ENCODE measurements at regions of chr12 and their contacts with region 1.

Region 1: GRCh38 chr12:42372154-42372791 is 46.3 kb downstream of the PPHLN1 start:
- DNase-seq: peak; percentile 33
- H3K4me3 Mint-ChIP-seq: no peak overlapping the region
- H3K27ac Mint-ChIP-seq: no peak overlapping the region
- H3K4me1 Mint-ChIP-seq: peaks cover 3% of the 10 kb centered on the region
- H3K27me3 Mint-ChIP-seq: no peaks in the 10 kb centered on the region

Region 2: GRCh38 chr12:40946612-40947194 is 1425.6 kb before region 1 on chr12:
- CTCF ChIA-PET with region 1: no interaction called
- intact Hi-C with region 1: loop called (anchors 10 kb)
- DNase-seq: no peak
- H3K4me3 Mint-ChIP-seq: no peak overlapping the region
- H3K27ac Mint-ChIP-seq: no peak overlapping the region
- H3K4me1 Mint-ChIP-seq: no peaks in the 10 kb centered on the region
- H3K27me3 Mint-ChIP-seq: peaks cover 9% of the 10 kb centered on the region

Region 3: GRCh38 chr12:41684997-41685396 is 687.3 kb before region 1 on chr12:
- CTCF ChIA-PET with region 1: no interaction called
- intact Hi-C with region 1: loop called (anchors 2 kb)
- DNase-seq: no peak
- H3K4me3 Mint-ChIP-seq: no peak overlapping the region
- H3K27ac Mint-ChIP-seq: no peak overlapping the region
- H3K4me1 Mint-ChIP-seq: no peaks in the 10 kb centered on the region
- H3K27me3 Mint-ChIP-seq: no peaks in the 10 kb centered on the region

Region 4: DNA sequence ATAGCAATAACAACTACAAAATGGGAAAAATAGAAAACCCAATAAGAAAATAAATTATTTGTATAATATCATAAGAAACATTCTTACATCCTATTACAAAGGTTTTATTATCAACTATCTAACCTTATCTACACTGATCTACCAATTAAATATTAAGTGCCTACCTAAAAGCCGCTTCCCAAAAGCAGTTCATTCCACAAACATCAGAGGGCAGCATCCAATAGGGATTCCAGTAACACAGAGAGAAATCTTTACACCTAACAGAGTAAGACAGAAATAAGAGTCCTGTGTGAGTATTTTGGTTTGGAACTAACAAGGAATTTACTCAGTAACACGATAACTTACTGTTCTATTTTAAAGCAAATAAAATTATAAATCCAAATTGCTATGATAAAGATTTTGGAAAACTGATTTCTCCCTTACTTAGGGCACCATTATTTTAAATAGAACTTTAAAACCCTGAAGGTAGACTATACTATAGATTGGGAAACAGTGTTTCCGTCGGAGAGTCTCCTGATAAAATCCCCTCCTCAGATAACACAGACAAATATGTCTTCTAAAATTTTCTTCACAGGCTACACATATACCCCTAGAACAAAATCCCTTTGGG is 242.6 kb before region 1 on chr12:
- CTCF ChIA-PET with region 1: interaction called, 13 read pairs
- intact Hi-C with region 1: loop called (anchors 1 kb)
- DNase-seq: peak; percentile 42
- H3K4me3 Mint-ChIP-seq: no peak overlapping the region
- H3K27ac Mint-ChIP-seq: no peak overlapping the region
- H3K4me1 Mint-ChIP-seq: peaks cover 41% of the 10 kb centered on the region
- H3K27me3 Mint-ChIP-seq: no peaks in the 10 kb centered on the region

Region 5: DNA sequence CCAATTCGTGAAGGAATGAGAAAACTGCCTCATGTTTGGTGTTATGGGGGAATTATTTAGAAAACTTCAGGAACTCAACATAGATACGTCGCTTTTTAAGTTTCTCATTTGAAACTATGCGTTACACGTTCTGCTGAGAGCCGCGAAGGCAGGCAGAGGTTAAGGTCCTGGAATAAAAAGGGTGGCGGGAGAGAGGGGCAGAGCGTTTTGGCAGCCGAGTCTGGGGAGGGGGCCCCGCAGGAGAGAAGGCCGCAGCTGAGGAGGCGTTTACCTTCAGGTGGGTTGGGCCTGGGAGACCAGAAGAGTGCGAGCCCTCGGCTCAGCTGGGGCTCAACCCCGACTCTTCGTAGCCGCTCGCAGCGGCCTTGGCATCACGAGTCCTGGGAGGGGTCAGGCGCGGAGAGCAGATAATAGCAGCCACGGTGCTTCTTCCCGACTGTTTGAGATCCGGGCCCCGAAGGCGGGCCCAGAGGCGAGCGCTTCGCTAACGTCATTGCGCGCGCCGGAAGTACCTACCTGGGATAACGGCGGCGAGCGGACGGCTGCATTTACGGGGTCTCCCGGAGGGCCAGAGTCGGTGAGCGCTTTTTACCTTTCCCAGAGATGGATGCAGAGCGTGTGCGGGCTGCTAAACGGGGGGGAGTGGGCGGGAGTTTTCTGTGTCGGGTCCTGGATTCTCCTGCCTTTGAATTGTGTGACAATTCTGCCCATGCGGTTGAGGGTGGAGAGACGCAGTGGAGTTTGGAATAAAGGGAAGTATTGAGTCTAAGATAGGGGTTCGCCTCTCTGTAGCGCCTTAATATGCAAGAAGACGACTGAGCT is 46.4 kb before region 1 on chr12 and contains the starts of genes PPHLN1 and ZCRB1:
- CTCF ChIA-PET with region 1: interaction called, 16 read pairs
- intact Hi-C with region 1: loop called (anchors 1 kb)
- DNase-seq: peak; percentile 84
- H3K4me3 Mint-ChIP-seq: peak within 1 kb of the TSS; percentile 94
- H3K27ac Mint-ChIP-seq: peak within 1 kb of the TSS; percentile 94
- H3K4me1 Mint-ChIP-seq: peaks cover 40% of the 10 kb centered on the region
- H3K27me3 Mint-ChIP-seq: no peaks in the 10 kb centered on the region
- total RNA-seq, gene PPHLN1: 52.9 to 63.3 TPM
- total RNA-seq, gene ZCRB1: 79.5 to 84.2 TPM

Region 6: GRCh38 chr12:42360747-42361403 is 11.4 kb before region 1 on chr12:
- CTCF ChIA-PET with region 1: interaction called, 21 read pairs
- intact Hi-C with region 1: no loop called
- DNase-seq: no peak
- H3K4me3 Mint-ChIP-seq: no peak overlapping the region
- H3K27ac Mint-ChIP-seq: peak overlapping the region; percentile 65
- H3K4me1 Mint-ChIP-seq: peaks cover 51% of the 10 kb centered on the region
- H3K27me3 Mint-ChIP-seq: no peaks in the 10 kb centered on the region